HepG2 (cell line): ENCODE measurements at regions of chr2 and their contacts with region 1.

Region 1: DNA sequence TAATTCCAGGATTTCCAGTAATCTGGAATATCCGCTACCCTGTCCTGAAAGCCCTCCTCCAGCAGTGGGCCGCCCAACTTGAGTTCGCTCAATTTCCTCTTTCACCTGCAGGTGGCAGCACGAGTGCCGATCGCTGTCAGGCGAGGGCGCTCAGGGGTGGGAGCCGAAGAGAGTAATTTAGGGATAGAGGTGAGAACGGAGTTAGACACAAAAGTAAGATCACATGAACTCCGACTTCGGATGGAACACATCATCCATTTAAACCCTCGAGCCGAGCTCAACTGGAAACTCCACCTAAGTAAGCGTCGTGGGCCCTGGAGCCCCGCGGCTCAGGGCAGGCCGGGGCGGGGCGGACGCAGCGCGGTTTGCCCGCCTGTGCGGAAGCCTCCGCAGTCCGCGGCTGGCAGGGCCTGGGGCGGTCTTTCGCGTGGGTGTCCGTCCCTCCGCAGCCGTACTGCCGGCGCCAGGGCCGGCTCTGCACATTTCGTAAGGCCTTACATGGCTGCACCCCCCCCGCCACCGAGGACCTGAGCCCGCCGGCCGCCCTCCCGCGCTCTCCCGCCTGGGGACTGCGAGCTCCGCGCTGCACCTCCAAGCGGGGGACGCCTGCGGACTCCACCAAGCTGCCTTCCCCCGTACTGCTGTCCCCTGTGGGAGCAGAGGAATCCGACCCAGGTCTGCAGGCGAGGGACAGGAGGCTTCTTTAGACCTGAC is 61.2 kb downstream of the SEMA4F start:
- DNase-seq: peak; percentile 72
- ATAC-seq: peak; percentile 94
- H3K4me3 ChIP-seq: peak overlapping the region; percentile 48 to 75 (median 74)
- H3K27ac ChIP-seq: no peak overlapping the region
- H3K4me1 ChIP-seq: peaks cover 45% of the 10 kb centered on the region
- H3K27me3 ChIP-seq: peaks cover 1 to 37% of the 10 kb centered on the region in 2 experiments; a peak in 3 of 5 replicates
- CTCF ChIP-seq: peak; percentile 99
- EP300 ChIP-seq: no peak
- POLR2A ChIP-seq: no peak
- RAD21 ChIP-seq: peak; percentile 92

Region 2: DNA sequence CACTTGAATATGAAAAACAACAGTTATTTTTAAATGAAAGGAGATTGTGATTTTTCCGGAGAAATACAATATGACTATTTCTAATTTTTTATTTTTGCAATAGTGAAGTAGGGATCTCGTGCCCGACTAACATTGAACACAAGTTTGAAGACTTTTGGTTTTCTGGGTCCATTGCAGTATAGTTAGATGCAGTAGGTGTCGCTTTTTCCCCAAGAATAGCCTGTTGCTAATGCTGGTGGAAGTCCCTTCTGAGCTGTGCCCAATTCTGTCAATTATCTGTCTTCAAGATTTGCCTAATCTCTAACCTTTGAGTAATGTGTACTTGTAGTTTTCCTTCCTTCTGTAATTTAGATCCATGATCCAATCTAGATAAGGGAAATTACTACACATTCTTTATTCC is 24.7 kb before region 1 on chr2:
- CTCF ChIA-PET with region 1: interaction called, 6 read pairs
- POLR2A ChIA-PET with region 1: no interaction called
- in situ Hi-C with region 1: no loop called
- intact Hi-C with region 1: loop called (anchors 1 kb)
- DNase-seq: peak; percentile 64
- ATAC-seq: peak; percentile 87
- H3K4me3 ChIP-seq: no peak overlapping the region
- H3K27ac ChIP-seq: no peak overlapping the region
- H3K4me1 ChIP-seq: peaks cover 24% of the 10 kb centered on the region; the same call in 1 of the 2 replicates
- H3K27me3 ChIP-seq: 0 out of 5 replicates have a peak, but pooled peaks cover 0 to 3% of the 10 kb centered on the region in 2 experiments
- CTCF ChIP-seq: peak; percentile 92
- EP300 ChIP-seq: no peak; a peak in 1 of 4 replicates
- POLR2A ChIP-seq: no peak
- RAD21 ChIP-seq: peak; percentile 92

Region 3: GRCh38 chr2:74703373-74703772 is 11.9 kb before region 1 on chr2:
- CTCF ChIA-PET with region 1: no interaction called
- POLR2A ChIA-PET with region 1: no interaction called
- in situ Hi-C with region 1: no loop called
- intact Hi-C with region 1: no loop called
- DNase-seq: no peak
- ATAC-seq: no peak
- H3K4me3 ChIP-seq: no peak overlapping the region
- H3K27ac ChIP-seq: no peak overlapping the region
- H3K4me1 ChIP-seq: peaks cover 32% of the 10 kb centered on the region
- H3K27me3 ChIP-seq: peaks cover 0 to 14% of the 10 kb centered on the region in 2 experiments; a peak in 2 of 5 replicates
- CTCF ChIP-seq: no peak
- EP300 ChIP-seq: no peak
- POLR2A ChIP-seq: no peak
- RAD21 ChIP-seq: no peak

Region 4: DNA sequence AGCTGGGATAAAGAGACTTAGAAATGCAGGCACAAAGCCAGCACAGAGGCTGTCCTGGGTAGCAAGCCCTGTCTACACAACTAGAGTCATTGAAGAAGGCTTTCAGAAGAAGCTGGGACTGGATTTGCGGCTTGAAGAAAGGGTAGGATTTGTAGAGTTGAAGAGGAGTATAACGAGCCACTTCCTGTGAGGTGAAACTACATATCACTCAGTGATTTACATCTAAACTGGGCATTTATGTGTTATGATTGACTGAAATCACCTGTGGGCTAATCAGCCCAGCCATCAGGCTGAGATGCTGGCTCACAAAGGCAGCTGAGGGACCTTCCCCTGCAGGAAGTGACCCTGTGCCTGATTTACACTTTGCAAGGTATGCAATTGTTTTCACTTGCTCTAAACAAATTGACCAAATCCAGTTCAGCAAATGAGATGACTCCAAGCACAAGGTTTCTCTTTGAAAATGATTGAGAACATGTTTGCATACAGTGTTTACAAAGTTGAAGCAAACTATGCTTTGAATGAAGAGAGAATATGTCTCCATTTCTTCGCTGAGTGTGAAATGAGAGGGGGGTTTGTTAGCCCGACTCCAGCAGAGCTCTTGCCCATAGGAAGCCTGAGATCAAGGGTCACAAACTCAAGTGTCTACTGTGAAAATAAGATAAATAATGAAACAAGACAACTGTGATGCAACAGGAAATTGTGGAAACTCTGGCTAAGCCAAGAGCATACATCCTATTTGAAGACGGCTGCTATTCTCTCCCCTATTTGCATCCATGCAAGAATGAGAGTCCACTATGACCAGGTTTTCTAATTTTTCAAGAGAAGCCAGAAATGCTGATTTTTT is 49.4 kb after region 1 on chr2:
- CTCF ChIA-PET with region 1: no interaction called
- POLR2A ChIA-PET with region 1: interaction called, 4 read pairs
- in situ Hi-C with region 1: no loop called
- intact Hi-C with region 1: loop called (anchors 1 kb)
- DNase-seq: peak; percentile 100
- ATAC-seq: peak; percentile 89
- H3K4me3 ChIP-seq: peak overlapping the region; percentile 0 to 58 (median 9); a peak in 2 of 6 replicates
- H3K27ac ChIP-seq: peak overlapping the region; percentile 81
- H3K4me1 ChIP-seq: peaks cover 91% of the 10 kb centered on the region
- H3K27me3 ChIP-seq: no peaks in the 10 kb centered on the region
- CTCF ChIP-seq: no peak
- EP300 ChIP-seq: peak; percentile 50 to 98; a peak in 3 of 4 replicates
- POLR2A ChIP-seq: no peak; a peak in 1 of 4 replicates
- RAD21 ChIP-seq: peak; percentile 29; the same call in 1 of the 2 replicates

Region 5: GRCh38 chr2:74816540-74817303 is 101.5 kb after region 1 on chr2:
- CTCF ChIA-PET with region 1: no interaction called
- POLR2A ChIA-PET with region 1: no interaction called
- in situ Hi-C with region 1: no loop called
- intact Hi-C with region 1: loop called (anchors 5 kb)
- DNase-seq: peak; percentile 92
- ATAC-seq: peak; percentile 96
- H3K4me3 ChIP-seq: peak overlapping the region; percentile 25 to 61 (median 43)
- H3K27ac ChIP-seq: peak overlapping the region; percentile 63
- H3K4me1 ChIP-seq: peaks cover 84% of the 10 kb centered on the region
- H3K27me3 ChIP-seq: 0 out of 5 replicates have a peak, but pooled peaks cover 0 to 4% of the 10 kb centered on the region in 2 experiments
- CTCF ChIP-seq: no peak
- EP300 ChIP-seq: peak in 1 of 2 experiments; percentile 76; a peak in 2 of 4 replicates
- POLR2A ChIP-seq: no peak; a peak in 1 of 4 replicates
- RAD21 ChIP-seq: 0 out of 2 replicates have a peak, but pooled peaks have one; percentile 27

Region 6: DNA sequence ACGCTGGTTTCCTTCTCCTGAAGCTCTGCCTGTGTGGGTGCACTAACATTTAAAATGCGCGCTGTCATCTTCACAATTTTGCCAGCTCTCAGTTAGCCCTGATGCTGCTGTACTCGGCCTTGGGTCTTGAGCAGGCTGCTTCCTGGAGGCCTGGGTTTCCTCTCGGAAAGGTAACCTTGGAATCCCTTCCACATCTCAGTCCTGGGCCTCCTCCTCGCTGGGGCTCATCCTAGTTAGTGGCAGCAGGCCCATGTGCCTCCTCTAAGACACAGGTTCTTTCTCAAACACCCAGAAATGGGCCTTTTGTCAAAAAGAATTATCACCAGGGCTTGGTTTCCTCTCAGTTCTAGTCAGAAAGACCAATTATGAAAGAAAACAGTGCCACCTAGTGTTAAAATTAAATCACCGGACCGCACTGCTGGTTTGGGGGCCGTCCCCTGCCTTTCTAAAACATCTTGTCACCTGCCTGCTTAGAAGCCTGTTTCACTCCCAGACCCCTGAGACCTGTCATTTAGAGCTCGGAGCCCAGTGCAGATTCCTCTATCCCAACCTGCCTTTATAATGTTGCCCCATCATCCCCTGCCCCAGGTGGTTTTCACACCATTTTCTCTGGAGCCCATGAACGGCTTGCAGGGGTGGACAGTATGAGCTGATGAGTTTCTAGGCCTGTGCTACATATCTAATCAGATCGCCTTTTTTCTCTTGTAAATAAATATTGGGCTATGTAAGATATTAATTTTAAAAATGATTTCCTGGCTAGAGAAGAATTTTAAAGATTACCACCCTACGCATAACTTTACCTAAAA is 161.0 kb after region 1 on chr2:
- CTCF ChIA-PET with region 1: interaction called, 57 read pairs
- POLR2A ChIA-PET with region 1: interaction called, 4 read pairs
- in situ Hi-C with region 1: loop called (anchors 5 kb)
- intact Hi-C with region 1: loop called (anchors 1 kb)
- DNase-seq: peak; percentile 61
- ATAC-seq: peak; percentile 71
- H3K4me3 ChIP-seq: no peak overlapping the region
- H3K27ac ChIP-seq: no peak overlapping the region
- H3K4me1 ChIP-seq: no peaks in the 10 kb centered on the region
- H3K27me3 ChIP-seq: no peaks in the 10 kb centered on the region
- CTCF ChIP-seq: peak; percentile 75
- EP300 ChIP-seq: no peak
- POLR2A ChIP-seq: no peak
- RAD21 ChIP-seq: peak; percentile 75